HepG2 (cell line): ENCODE measurements at regions of chr2 and their contacts with region 1.

Region 1: DNA sequence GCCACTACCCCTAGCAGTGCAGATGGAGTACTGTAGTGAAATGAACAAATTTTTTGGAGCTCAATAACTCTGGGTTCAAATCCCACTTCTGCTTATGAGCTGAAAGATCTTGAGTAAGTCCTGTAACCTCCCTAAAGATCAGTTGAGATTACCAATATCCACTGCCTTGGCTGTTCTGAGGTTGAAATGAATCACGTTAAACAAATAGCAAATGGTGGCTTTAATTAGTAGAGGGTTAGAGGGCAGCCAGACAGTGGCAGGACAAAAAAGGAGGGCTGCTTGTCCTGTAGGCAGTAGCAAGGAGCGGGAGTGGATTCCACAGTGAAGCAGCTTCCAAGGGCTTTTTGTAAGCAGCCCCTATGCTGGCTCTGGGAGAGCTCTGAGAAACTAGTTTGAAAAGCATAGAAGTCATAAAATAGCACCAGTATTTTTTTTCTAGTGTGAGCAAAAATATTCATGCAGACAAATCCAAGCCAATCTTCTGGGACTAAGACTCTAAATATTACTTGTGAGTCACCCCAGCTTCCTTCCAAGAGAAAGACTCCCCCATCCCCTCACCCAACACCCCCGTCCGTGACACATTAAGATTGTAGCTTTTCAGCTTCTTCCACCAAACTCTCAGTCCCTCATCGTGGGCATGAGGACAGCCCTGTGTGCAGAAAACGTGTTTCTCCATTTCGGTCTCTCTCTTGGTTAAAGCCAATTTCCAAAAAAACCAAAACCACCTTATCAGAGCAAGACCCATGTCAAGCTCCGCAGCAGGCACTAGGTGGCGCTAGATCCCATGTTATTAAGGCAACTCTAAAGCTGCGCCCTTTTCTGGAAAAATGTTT is 123.5 kb upstream of the LGALSL start:
- DNase-seq: peak; percentile 80
- ATAC-seq: peak; percentile 86
- H3K4me3 ChIP-seq: no peak overlapping the region
- H3K27ac ChIP-seq: no peak overlapping the region
- H3K4me1 ChIP-seq: no peaks in the 10 kb centered on the region
- H3K27me3 ChIP-seq: peaks cover 0 to 41% of the 10 kb centered on the region in 2 experiments; a peak in 3 of 5 replicates
- CTCF ChIP-seq: peak; percentile 96
- EP300 ChIP-seq: no peak
- POLR2A ChIP-seq: no peak
- RAD21 ChIP-seq: peak; percentile 95

Region 2: GRCh38 chr2:64052468-64053241 is 277.8 kb before region 1 on chr2:
- CTCF ChIA-PET with region 1: interaction called, 4 read pairs
- POLR2A ChIA-PET with region 1: no interaction called
- in situ Hi-C with region 1: loop called (anchors 5 kb)
- intact Hi-C with region 1: loop called (anchors 1 kb)
- DNase-seq: no peak
- ATAC-seq: no peak
- H3K4me3 ChIP-seq: no peak overlapping the region
- H3K27ac ChIP-seq: no peak overlapping the region
- H3K4me1 ChIP-seq: peaks cover 10% of the 10 kb centered on the region
- H3K27me3 ChIP-seq: 0 out of 5 replicates have a peak, but pooled peaks cover 0 to 2% of the 10 kb centered on the region in 2 experiments
- CTCF ChIP-seq: no peak
- EP300 ChIP-seq: no peak
- POLR2A ChIP-seq: no peak
- RAD21 ChIP-seq: no peak

Region 3: GRCh38 chr2:64562148-64562784 is 231.8 kb after region 1 on chr2:
- CTCF ChIA-PET with region 1: interaction called, 5 read pairs
- POLR2A ChIA-PET with region 1: no interaction called
- in situ Hi-C with region 1: loop called (anchors 5 kb)
- intact Hi-C with region 1: loop called (anchors 1 kb)
- DNase-seq: peak; percentile 26
- ATAC-seq: peak; percentile 38; the same call in 1 of the 3 replicates
- H3K4me3 ChIP-seq: no peak overlapping the region
- H3K27ac ChIP-seq: no peak overlapping the region
- H3K4me1 ChIP-seq: no peaks in the 10 kb centered on the region
- H3K27me3 ChIP-seq: no peaks in the 10 kb centered on the region
- CTCF ChIP-seq: peak; percentile 48
- EP300 ChIP-seq: no peak
- POLR2A ChIP-seq: no peak
- RAD21 ChIP-seq: no peak

Region 4: GRCh38 chr2:64873472-64873924 is 543.0 kb after region 1 on chr2:
- CTCF ChIA-PET with region 1: interaction called, 5 read pairs
- POLR2A ChIA-PET with region 1: no interaction called
- in situ Hi-C with region 1: no loop called
- intact Hi-C with region 1: loop called (anchors 1 kb)
- DNase-seq: peak; percentile 53
- ATAC-seq: peak; percentile 96
- H3K4me3 ChIP-seq: peak overlapping the region in 1 of 3 experiments; percentile 32; a peak in 1 of 6 replicates
- H3K27ac ChIP-seq: no peak overlapping the region
- H3K4me1 ChIP-seq: 0 out of 2 replicates have a peak, but pooled peaks cover 8% of the 10 kb centered on the region
- H3K27me3 ChIP-seq: peaks cover 0 to 13% of the 10 kb centered on the region in 2 experiments; a peak in 2 of 5 replicates
- CTCF ChIP-seq: peak; percentile 99
- EP300 ChIP-seq: no peak
- POLR2A ChIP-seq: no peak
- RAD21 ChIP-seq: peak; percentile 95

Region 5: DNA sequence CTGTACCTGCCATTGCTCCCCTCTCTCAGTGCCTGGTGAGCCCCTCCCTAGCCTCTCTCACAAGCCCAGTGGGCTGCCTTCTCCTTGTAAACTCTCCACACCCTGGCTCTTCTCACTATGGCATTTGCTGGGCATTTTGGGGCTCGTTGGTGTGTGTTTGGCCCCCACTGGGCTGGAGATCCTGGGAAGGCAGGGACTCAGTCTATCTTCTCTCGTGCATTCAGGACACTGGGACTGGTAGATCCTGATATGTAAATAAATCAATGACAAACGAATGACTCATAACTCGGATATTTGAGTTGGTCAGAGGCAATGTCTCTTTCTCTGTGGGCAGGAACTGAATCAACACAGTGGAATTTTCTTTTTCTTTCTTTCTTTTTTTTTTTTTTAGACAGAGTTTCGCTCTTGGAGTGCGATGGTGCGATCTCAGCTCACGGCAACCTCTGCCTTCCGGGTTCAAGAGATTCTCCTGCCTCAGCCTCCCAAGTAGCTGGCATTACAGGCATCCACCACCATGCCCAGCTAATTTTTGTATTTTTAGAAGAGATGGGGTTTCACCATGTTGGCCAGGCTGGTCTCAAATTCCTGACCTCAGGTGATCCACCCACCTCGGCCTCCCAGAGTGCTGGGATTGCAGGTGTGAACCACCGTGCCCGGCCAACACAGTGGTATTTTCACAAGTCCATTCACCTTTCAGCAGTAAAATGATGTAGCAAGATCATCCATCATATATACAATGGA is 1246.5 kb after region 1 on chr2:
- CTCF ChIA-PET with region 1: no interaction called
- POLR2A ChIA-PET with region 1: no interaction called
- in situ Hi-C with region 1: loop called (anchors 10 kb)
- intact Hi-C with region 1: loop called (anchors 1 kb)
- DNase-seq: peak; percentile 91
- ATAC-seq: peak; percentile 91
- H3K4me3 ChIP-seq: peak overlapping the region in 2 of 3 experiments; percentile 13 to 23; a peak in 1 of 6 replicates
- H3K27ac ChIP-seq: no peak overlapping the region
- H3K4me1 ChIP-seq: peaks cover 19% of the 10 kb centered on the region
- H3K27me3 ChIP-seq: no peaks in the 10 kb centered on the region
- CTCF ChIP-seq: no peak
- EP300 ChIP-seq: peak in 1 of 2 experiments; percentile 74; a peak in 1 of 4 replicates
- POLR2A ChIP-seq: no peak
- RAD21 ChIP-seq: no peak